WTC11 (cell line): ENCODE measurements at regions of chr17 and their contacts with region 1.

Region 1: DNA sequence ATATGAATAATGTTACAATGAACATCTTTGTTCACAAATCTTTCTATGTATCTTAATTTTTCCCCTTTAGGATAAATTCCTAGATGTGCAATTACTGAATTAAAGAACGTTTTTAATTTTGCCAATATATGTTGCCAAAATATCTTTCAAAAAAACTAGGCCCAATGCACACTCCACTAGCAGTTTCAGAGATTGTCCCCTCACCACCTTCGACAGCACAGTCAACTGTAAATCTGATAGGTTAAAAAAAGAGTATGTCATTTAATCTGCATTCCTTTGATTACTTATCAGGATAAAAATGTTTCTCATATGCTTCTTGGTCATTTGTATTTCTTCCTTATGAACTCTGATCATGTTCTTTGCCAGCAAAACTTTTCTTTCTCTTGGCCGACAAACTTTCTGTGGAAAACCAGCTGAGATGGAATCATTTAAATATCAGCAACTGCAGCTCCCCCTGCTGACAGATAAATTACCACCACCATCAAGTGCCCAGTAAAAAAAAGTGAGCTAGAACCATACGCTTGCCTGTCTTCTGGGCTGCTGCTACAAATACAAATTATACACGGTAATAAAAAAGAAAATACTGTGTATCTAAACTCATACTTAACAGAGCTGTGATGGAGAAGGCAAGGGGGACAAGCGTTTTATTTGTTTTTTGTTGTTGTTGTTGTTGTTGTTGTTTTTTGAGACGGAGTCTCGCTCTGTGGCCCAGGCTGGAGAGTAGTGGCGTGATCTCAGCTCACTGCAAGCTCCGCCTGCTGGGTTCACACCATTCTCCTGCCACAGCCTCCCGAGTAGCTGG is 19.6 kb upstream of the KANSL1 start:
- DNase-seq: peak; percentile 27
- ATAC-seq: peak; percentile 82
- H3K4me3 Mint-ChIP-seq: no peak overlapping the region
- H3K27ac Mint-ChIP-seq: no peak overlapping the region; the same call in 1 of the 2 replicates
- H3K4me1 Mint-ChIP-seq: peaks cover 6% of the 10 kb centered on the region
- H3K27me3 Mint-ChIP-seq: no peaks in the 10 kb centered on the region
- CTCF ChIP-seq: peak; percentile 30; the same call in 1 of the 2 replicates

Region 2: DNA sequence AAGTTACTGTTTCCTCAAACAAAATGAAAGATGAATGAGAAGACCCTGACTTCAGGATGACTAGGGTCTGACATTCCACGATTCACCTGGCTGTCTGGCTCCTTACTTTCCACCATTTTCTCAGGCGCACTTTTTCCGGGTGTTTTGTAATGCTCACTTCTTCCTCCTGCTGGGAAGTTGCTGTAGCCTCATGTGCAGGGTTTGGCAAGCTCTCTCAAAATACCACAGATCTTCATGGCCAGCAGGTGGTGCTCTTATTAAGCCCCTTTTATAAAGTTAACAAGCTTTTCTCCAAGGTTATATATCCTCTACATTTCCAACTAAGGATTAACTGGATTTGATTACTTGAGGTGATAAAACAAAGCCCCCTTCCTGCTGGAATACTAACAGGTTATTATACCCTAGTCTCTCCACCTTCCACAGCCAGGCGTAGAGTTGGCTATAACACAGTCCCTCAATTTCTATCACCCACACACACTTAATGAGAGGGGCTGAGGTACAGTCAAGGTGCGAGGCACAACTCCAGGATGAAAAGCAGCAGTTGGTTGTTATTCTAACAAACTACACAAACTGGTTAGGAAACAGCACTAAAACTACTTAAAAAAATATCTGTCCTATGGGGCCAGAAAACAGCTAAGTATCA is 168.4 kb before region 1 on chr17:
- CTCF ChIA-PET with region 1: interaction called, 20 read pairs
- POLR2A ChIA-PET with region 1: no interaction called
- DNase-seq: peak; percentile 56
- ATAC-seq: peak; percentile 87
- H3K4me3 Mint-ChIP-seq: no peak overlapping the region
- H3K27ac Mint-ChIP-seq: peak overlapping the region; percentile 84
- H3K4me1 Mint-ChIP-seq: peaks cover 11% of the 10 kb centered on the region
- H3K27me3 Mint-ChIP-seq: no peaks in the 10 kb centered on the region
- CTCF ChIP-seq: peak; percentile 24; the same call in 1 of the 2 replicates

Region 3: DNA sequence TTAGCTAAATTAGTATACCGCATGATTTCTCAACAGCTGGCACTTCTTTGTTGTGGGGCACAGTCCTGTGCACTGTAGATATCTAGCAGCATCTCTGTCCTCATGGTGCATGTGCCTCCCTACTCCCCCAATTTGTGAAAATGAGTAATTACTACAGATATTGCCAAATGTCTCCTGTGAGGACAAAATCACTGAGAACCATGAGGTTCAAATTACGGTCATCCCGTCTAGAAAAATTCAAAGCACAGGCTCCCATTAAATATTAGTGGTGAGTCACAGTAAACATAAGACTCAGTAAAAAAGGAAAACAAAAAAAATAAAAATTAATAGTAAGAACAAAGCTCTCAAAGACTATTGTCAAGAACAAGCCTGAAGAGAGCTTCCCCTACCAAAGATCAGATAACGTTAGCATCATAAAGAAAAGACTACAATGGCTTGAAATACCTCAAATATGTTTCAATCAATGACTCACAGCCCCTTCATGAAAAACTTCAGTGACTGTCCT is 156.0 kb before region 1 on chr17:
- CTCF ChIA-PET with region 1: interaction called, 22 read pairs
- POLR2A ChIA-PET with region 1: interaction called, 3 read pairs
- DNase-seq: no peak
- ATAC-seq: no peak
- H3K4me3 Mint-ChIP-seq: no peak overlapping the region
- H3K27ac Mint-ChIP-seq: peak overlapping the region; percentile 73; the same call in 1 of the 2 replicates
- H3K4me1 Mint-ChIP-seq: peaks cover 38% of the 10 kb centered on the region
- H3K27me3 Mint-ChIP-seq: no peaks in the 10 kb centered on the region
- CTCF ChIP-seq: no peak

Region 4: DNA sequence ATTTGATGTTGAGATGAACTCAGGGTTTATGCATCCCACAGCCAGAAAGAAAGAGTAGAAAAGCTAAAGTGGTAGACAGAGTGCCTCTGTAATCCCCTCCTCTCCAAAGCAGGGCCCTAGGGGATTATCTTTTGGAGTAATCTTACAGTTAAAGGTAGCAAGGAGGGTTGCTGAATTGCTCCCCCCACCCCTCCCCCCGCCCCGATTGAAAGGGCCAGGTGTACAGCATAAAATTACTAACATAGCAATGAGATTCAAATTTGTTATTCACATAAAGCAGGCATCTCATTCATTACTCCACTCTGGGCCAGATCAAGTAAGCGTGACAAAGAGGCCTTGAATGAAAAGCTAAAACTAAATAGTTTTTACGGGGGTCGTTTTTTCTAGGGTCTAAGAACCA is 141.0 kb before region 1 on chr17:
- CTCF ChIA-PET with region 1: no interaction called
- POLR2A ChIA-PET with region 1: no interaction called
- DNase-seq: no peak
- ATAC-seq: no peak
- H3K4me3 Mint-ChIP-seq: no peak overlapping the region
- H3K27ac Mint-ChIP-seq: peak overlapping the region; percentile 55
- H3K4me1 Mint-ChIP-seq: peaks cover 43% of the 10 kb centered on the region
- H3K27me3 Mint-ChIP-seq: no peaks in the 10 kb centered on the region
- CTCF ChIP-seq: no peak

Region 5: GRCh38 chr17:46097497-46097896 is 115.3 kb before region 1 on chr17:
- CTCF ChIA-PET with region 1: no interaction called
- POLR2A ChIA-PET with region 1: no interaction called
- DNase-seq: no peak
- ATAC-seq: no peak
- H3K4me3 Mint-ChIP-seq: no peak overlapping the region
- H3K27ac Mint-ChIP-seq: no peak overlapping the region; the same call in 1 of the 2 replicates
- H3K4me1 Mint-ChIP-seq: peaks cover 40% of the 10 kb centered on the region
- H3K27me3 Mint-ChIP-seq: no peaks in the 10 kb centered on the region
- CTCF ChIP-seq: no peak

Region 6: DNA sequence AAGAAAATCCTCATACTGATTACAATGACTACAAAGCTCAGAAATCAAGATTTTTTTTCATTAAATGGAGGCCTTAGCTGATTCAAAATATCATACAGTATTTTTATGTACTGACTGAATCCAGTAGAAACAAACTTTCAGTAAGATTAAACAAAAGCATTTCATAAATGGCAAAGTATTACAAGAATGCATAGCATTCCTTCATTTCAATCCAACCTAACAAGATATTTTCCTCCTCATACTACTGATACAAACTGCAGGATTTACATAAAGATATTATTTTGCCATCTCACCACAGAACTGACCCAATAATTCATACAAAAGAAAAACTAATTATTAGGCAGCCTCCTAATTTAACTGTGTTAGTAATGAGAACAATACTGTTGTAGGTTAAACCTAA is 13.5 kb before region 1 on chr17:
- CTCF ChIA-PET with region 1: interaction called, 14 read pairs
- POLR2A ChIA-PET with region 1: no interaction called
- DNase-seq: no peak
- ATAC-seq: no peak
- H3K4me3 Mint-ChIP-seq: no peak overlapping the region
- H3K27ac Mint-ChIP-seq: no peak overlapping the region
- H3K4me1 Mint-ChIP-seq: peaks cover 6% of the 10 kb centered on the region
- H3K27me3 Mint-ChIP-seq: 0 out of 2 replicates have a peak, but pooled peaks cover 2% of the 10 kb centered on the region
- CTCF ChIP-seq: no peak

Region 7: GRCh38 chr17:46274238-46274637 is 61.4 kb after region 1 on chr17:
- CTCF ChIA-PET with region 1: no interaction called
- POLR2A ChIA-PET with region 1: no interaction called
- DNase-seq: no peak
- ATAC-seq: no peak
- H3K4me3 Mint-ChIP-seq: no peak overlapping the region
- H3K27ac Mint-ChIP-seq: no peak overlapping the region
- H3K4me1 Mint-ChIP-seq: no peaks in the 10 kb centered on the region
- H3K27me3 Mint-ChIP-seq: peaks cover 11% of the 10 kb centered on the region
- CTCF ChIP-seq: no peak

Region 8: GRCh38 chr17:46916211-46916610 is 703.4 kb after region 1 on chr17:
- CTCF ChIA-PET with region 1: no interaction called
- POLR2A ChIA-PET with region 1: no interaction called
- DNase-seq: no peak
- ATAC-seq: no peak
- H3K4me3 Mint-ChIP-seq: no peak overlapping the region
- H3K27ac Mint-ChIP-seq: no peak overlapping the region
- H3K4me1 Mint-ChIP-seq: no peaks in the 10 kb centered on the region
- H3K27me3 Mint-ChIP-seq: 0 out of 2 replicates have a peak, but pooled peaks cover 3% of the 10 kb centered on the region
- CTCF ChIP-seq: no peak